HepG2 (cell line): ENCODE measurements at regions of chr6 and their contacts with region 1.

Region 1: DNA sequence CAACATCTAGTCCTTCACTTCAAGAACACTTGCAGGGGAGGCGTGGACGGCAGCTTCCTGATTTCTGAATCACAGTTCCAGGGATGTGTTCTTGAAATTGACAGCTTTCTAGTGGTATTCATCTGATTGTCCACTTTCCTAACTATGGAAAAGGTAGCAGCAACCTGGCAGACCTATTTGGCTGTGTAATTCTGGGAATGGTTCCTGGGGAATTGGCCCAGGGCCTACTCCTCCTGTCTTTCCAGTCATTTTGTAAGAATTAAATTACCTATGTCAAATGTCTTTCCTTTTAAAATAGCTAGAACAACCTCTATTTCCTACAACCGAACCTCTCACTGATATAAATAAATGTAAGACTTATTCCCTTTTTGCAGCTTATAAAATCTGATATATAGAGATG is 85.5 kb upstream of the RSPO3 start:
- DNase-seq: no peak
- ATAC-seq: no peak
- H3K4me3 ChIP-seq: no peak overlapping the region
- H3K27ac ChIP-seq: no peak overlapping the region
- H3K4me1 ChIP-seq: no peaks in the 10 kb centered on the region
- H3K27me3 ChIP-seq: peaks cover 0 to 13% of the 10 kb centered on the region in 2 experiments; a peak in 3 of 5 replicates
- CTCF ChIP-seq: no peak
- EP300 ChIP-seq: no peak
- POLR2A ChIP-seq: no peak
- RAD21 ChIP-seq: no peak

Region 2: DNA sequence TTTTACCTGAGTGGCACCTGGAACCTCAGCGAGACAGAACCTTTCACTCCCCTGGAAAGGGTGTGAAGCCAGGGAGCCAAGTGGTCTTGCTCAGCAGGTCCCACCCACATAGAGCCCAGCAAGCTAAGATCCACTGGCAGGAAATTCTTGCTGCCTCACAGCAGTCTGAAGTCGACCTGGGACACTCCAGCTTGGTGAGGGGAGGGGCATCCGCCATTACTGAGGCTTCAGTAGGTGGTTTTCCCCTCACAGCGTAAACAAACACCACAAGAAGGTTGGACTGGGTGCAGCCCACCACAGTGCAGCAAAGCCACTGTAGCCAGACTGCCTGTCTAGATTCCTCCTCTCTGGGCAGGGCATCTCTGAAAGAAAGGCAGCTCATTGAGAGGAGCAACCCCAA is 49.2 kb before region 1 on chr6:
- CTCF ChIA-PET with region 1: no interaction called
- POLR2A ChIA-PET with region 1: no interaction called
- in situ Hi-C with region 1: no loop called
- intact Hi-C with region 1: no loop called
- DNase-seq: no peak
- ATAC-seq: no peak
- H3K4me3 ChIP-seq: no peak overlapping the region
- H3K27ac ChIP-seq: no peak overlapping the region
- H3K4me1 ChIP-seq: no peaks in the 10 kb centered on the region
- H3K27me3 ChIP-seq: no peaks in the 10 kb centered on the region
- CTCF ChIP-seq: no peak
- EP300 ChIP-seq: no peak
- POLR2A ChIP-seq: no peak
- RAD21 ChIP-seq: no peak

Region 3: DNA sequence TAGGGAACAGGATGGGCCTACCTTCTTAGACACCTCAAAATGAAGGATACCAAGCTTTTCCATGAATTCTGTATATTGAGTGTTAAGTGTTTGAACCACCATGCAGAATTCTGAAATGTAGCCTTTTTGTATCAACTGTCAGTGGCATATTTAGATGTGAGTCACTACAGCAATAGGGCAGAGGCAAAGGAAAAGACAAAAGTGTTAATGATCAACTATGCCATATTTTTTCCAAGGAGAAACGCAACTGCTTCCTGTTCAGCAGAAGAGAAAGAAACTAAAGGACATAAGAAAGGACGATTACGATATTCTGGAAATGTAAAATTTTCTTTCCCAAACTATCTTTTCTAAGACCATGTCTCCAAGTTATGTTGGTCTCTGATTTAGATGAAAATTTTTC is 19.1 kb before region 1 on chr6:
- CTCF ChIA-PET with region 1: no interaction called
- POLR2A ChIA-PET with region 1: no interaction called
- in situ Hi-C with region 1: no loop called
- intact Hi-C with region 1: loop called (anchors 1 kb)
- DNase-seq: no peak
- ATAC-seq: no peak
- H3K4me3 ChIP-seq: no peak overlapping the region
- H3K27ac ChIP-seq: no peak overlapping the region
- H3K4me1 ChIP-seq: no peaks in the 10 kb centered on the region
- H3K27me3 ChIP-seq: peaks cover 4 to 40% of the 10 kb centered on the region in 2 experiments; a peak in 4 of 5 replicates
- CTCF ChIP-seq: no peak
- EP300 ChIP-seq: no peak
- POLR2A ChIP-seq: no peak
- RAD21 ChIP-seq: no peak

Region 4: GRCh38 chr6:127058936-127059335 is 26.0 kb after region 1 on chr6:
- CTCF ChIA-PET with region 1: no interaction called
- POLR2A ChIA-PET with region 1: no interaction called
- in situ Hi-C with region 1: no loop called
- intact Hi-C with region 1: no loop called
- DNase-seq: no peak
- ATAC-seq: no peak
- H3K4me3 ChIP-seq: no peak overlapping the region
- H3K27ac ChIP-seq: no peak overlapping the region
- H3K4me1 ChIP-seq: no peaks in the 10 kb centered on the region
- H3K27me3 ChIP-seq: no peaks in the 10 kb centered on the region
- CTCF ChIP-seq: no peak
- EP300 ChIP-seq: no peak
- POLR2A ChIP-seq: no peak
- RAD21 ChIP-seq: no peak